Activated CD8-positive, alpha-beta T cell treated with anti-CD3 and anti-CD28 coated beads for 36 hours (primary cell): ENCODE measurements at regions of chr2 and their contacts with region 1.

Region 1: DNA sequence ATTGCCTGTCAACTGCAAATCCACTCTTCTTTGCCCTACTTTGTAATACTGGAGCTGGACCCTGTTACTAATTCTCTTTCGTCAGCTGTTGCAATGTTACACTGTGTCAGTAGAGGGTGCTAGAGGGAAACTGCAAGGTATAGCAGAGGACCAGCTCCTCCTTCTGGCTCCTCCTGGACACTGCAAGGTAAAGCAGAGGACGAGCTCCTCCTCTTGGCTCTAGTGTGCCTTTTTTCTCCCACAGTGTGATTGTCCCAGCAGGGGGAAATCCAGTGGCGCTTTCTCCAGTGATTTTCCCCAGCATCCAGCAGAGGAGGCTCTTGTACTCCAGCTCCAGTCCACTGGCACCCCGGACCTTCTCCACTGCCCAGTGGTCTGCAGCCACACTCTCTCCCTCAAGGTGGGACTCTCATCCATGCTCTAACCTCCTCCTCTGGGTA is 95.6 kb downstream of the CAPN13 start:
- DNase-seq: peak; percentile 93
- ATAC-seq: peak; percentile 91
- H3K4me3 Mint-ChIP-seq: no peak overlapping the region
- H3K27ac Mint-ChIP-seq: no peak overlapping the region
- H3K4me1 Mint-ChIP-seq: peaks cover 12% of the 10 kb centered on the region
- H3K27me3 Mint-ChIP-seq: no peaks in the 10 kb centered on the region
- CTCF ChIP-seq: peak; percentile 100

Region 2: GRCh38 chr2:30139131-30139870 is 572.4 kb before region 1 on chr2:
- CTCF ChIA-PET with region 1: interaction called, 15 read pairs
- POLR2A ChIA-PET with region 1: no interaction called
- intact Hi-C with region 1: no loop called
- DNase-seq: peak; percentile 73
- ATAC-seq: peak; percentile 77
- H3K4me3 Mint-ChIP-seq: peak overlapping the region; percentile 43
- H3K27ac Mint-ChIP-seq: peak overlapping the region; percentile 83
- H3K4me1 Mint-ChIP-seq: peaks cover 22% of the 10 kb centered on the region
- H3K27me3 Mint-ChIP-seq: peaks cover 2% of the 10 kb centered on the region
- CTCF ChIP-seq: no peak

Region 3: GRCh38 chr2:30178618-30179434 is 532.8 kb before region 1 on chr2:
- CTCF ChIA-PET with region 1: interaction called, 11 read pairs
- POLR2A ChIA-PET with region 1: no interaction called
- intact Hi-C with region 1: no loop called
- DNase-seq: no peak
- ATAC-seq: no peak
- H3K4me3 Mint-ChIP-seq: no peak overlapping the region
- H3K27ac Mint-ChIP-seq: no peak overlapping the region
- H3K4me1 Mint-ChIP-seq: no peaks in the 10 kb centered on the region
- H3K27me3 Mint-ChIP-seq: no peaks in the 10 kb centered on the region
- CTCF ChIP-seq: no peak

Region 4: DNA sequence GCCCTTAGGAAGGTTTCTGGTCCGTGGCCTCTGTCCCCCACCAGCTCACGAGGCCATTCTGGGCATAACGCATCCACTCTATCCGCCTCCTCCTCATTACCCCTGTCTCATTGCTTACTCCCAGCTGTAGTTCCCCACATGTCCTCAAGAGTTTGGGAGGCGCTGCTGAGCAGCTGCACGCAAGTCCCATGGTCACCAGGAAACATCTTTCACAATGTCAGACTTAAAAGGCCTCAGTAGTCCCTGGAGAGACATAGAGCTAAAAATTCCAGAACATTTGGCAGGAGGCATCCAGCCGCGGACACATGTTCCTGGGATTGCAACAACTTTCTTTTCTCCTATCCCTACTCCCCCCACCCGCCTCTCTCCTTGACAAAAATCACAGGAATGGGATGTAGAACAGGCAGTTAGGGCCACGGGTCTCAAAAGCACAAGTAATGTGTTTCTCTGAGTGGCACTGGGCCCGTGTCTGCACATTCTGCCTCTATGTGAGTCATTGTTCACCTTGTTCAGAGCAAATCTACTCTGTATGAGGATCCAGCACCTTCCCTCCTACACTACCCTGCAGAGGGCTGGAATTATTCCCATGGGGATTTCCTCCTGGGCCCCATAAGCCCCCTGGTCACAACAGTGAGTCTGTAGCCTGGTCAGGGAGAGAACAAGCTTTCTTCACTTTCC is 472.2 kb before region 1 on chr2:
- CTCF ChIA-PET with region 1: interaction called, 24 read pairs
- POLR2A ChIA-PET with region 1: no interaction called
- intact Hi-C with region 1: no loop called
- DNase-seq: peak; percentile 88
- ATAC-seq: peak; percentile 69
- H3K4me3 Mint-ChIP-seq: peak overlapping the region; percentile 78
- H3K27ac Mint-ChIP-seq: peak overlapping the region; percentile 97
- H3K4me1 Mint-ChIP-seq: peaks cover 89% of the 10 kb centered on the region
- H3K27me3 Mint-ChIP-seq: no peaks in the 10 kb centered on the region
- CTCF ChIP-seq: peak; percentile 93

Region 5: GRCh38 chr2:30611583-30611982 is 100.1 kb before region 1 on chr2:
- CTCF ChIA-PET with region 1: no interaction called
- POLR2A ChIA-PET with region 1: no interaction called
- intact Hi-C with region 1: no loop called
- DNase-seq: no peak
- ATAC-seq: no peak
- H3K4me3 Mint-ChIP-seq: no peak overlapping the region
- H3K27ac Mint-ChIP-seq: no peak overlapping the region
- H3K4me1 Mint-ChIP-seq: no peaks in the 10 kb centered on the region
- H3K27me3 Mint-ChIP-seq: no peaks in the 10 kb centered on the region
- CTCF ChIP-seq: no peak

Region 6: GRCh38 chr2:30691948-30692828 is 19.5 kb before region 1 on chr2:
- CTCF ChIA-PET with region 1: interaction called, 125 read pairs
- POLR2A ChIA-PET with region 1: no interaction called
- intact Hi-C with region 1: no loop called
- DNase-seq: no peak
- ATAC-seq: no peak
- H3K4me3 Mint-ChIP-seq: no peak overlapping the region
- H3K27ac Mint-ChIP-seq: no peak overlapping the region
- H3K4me1 Mint-ChIP-seq: no peaks in the 10 kb centered on the region
- H3K27me3 Mint-ChIP-seq: no peaks in the 10 kb centered on the region
- CTCF ChIP-seq: no peak

Region 7: GRCh38 chr2:31170071-31170698 is 458.5 kb after region 1 on chr2:
- CTCF ChIA-PET with region 1: interaction called, 93 read pairs
- POLR2A ChIA-PET with region 1: no interaction called
- intact Hi-C with region 1: loop called (anchors 2 kb)
- DNase-seq: peak; percentile 64
- ATAC-seq: peak; percentile 93
- H3K4me3 Mint-ChIP-seq: no peak overlapping the region
- H3K27ac Mint-ChIP-seq: no peak overlapping the region
- H3K4me1 Mint-ChIP-seq: no peaks in the 10 kb centered on the region
- H3K27me3 Mint-ChIP-seq: peaks cover 3% of the 10 kb centered on the region
- CTCF ChIP-seq: peak; percentile 90

Region 8: DNA sequence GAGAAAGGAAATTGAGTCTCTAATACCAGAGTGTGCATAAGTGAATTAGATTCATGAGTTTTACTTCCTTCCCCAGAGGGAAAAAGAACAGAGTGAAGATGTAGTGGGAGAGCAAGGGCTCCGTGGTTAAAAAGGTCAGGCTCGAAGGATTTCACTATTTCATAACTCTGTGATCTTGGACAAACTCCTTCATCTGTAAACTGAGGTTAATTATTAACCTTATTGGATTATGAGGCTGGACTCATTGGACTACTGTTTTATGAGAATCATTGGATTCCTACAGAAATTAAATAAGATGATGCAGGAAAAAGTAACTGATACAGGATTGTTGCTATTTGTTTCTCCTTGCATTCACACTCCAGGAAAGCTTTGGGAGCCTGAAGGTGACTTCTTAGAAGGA is 824.1 kb after region 1 on chr2:
- CTCF ChIA-PET with region 1: no interaction called
- POLR2A ChIA-PET with region 1: no interaction called
- intact Hi-C with region 1: no loop called
- DNase-seq: no peak
- ATAC-seq: no peak
- H3K4me3 Mint-ChIP-seq: no peak overlapping the region
- H3K27ac Mint-ChIP-seq: no peak overlapping the region
- H3K4me1 Mint-ChIP-seq: no peaks in the 10 kb centered on the region
- H3K27me3 Mint-ChIP-seq: peaks cover 5% of the 10 kb centered on the region
- CTCF ChIP-seq: no peak